BJ (cell line): ENCODE measurements at regions of chr14 and their contacts with region 1.

Region 1: GRCh38 chr14:49461529-49462401 is 124.4 kb downstream of the RPS29 start:
- DNase-seq: peak; percentile 16
- H3K4me3 ChIP-seq: no peak overlapping the region
- H3K27me3 ChIP-seq: no peaks in the 10 kb centered on the region
- CTCF ChIP-seq: peak; percentile 66

Region 2: GRCh38 chr14:49483268-49483667 is 21.5 kb after region 1 on chr14:
- CTCF ChIA-PET with region 1: interaction called, 13 read pairs
- POLR2A ChIA-PET with region 1: no interaction called
- DNase-seq: no peak
- H3K4me3 ChIP-seq: no peak overlapping the region
- H3K27me3 ChIP-seq: no peaks in the 10 kb centered on the region
- CTCF ChIP-seq: no peak

Region 3: DNA sequence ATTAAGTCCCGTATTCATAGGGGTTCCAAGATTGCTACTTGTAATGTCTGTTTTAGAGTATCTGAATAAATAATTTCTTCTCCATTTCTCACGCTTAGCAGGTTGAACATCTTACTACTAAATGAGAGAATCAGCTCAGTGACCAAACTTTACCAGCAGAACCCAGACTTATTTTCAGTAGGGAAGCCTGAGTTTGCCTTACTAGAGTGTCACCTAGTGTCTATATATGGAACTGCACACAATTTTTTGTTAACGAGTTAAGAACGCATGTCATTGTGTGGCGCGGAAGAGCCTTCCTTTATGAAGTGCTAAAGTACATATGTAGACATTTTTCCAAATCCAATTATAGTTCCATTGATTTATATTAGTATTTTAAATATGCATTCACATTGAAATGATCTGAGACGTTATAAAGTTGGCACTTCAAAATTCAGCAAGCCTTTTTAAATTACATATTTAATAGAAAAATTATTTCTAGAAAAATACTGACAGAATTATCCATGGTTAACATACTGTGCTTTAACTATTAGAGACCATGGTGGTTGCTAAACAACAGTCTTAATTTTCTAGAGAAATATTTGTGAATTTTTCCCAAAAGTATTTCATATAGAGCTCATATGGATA is 36.1 kb after region 1 on chr14:
- CTCF ChIA-PET with region 1: interaction called, 28 read pairs
- POLR2A ChIA-PET with region 1: no interaction called
- DNase-seq: no peak
- H3K4me3 ChIP-seq: no peak overlapping the region
- H3K27me3 ChIP-seq: peaks cover 5% of the 10 kb centered on the region
- CTCF ChIP-seq: peak; percentile 84

Region 4: GRCh38 chr14:49538926-49539325 is 77.2 kb after region 1 on chr14:
- CTCF ChIA-PET with region 1: interaction called, 10 read pairs
- POLR2A ChIA-PET with region 1: no interaction called
- DNase-seq: no peak
- H3K4me3 ChIP-seq: no peak overlapping the region
- H3K27me3 ChIP-seq: no peaks in the 10 kb centered on the region
- CTCF ChIP-seq: no peak

Region 5: GRCh38 chr14:49550286-49551184 is 88.8 kb after region 1 on chr14:
- CTCF ChIA-PET with region 1: interaction called, 15 read pairs
- POLR2A ChIA-PET with region 1: no interaction called
- DNase-seq: no peak
- H3K4me3 ChIP-seq: no peak overlapping the region
- H3K27me3 ChIP-seq: no peaks in the 10 kb centered on the region
- CTCF ChIP-seq: peak; percentile 32

Region 6: GRCh38 chr14:49620182-49621113 is 158.7 kb after region 1 on chr14 and contains the starts of genes MGAT2 and RPL36AL:
- CTCF ChIA-PET with region 1: no interaction called
- POLR2A ChIA-PET with region 1: interaction called, 21 read pairs
- DNase-seq: peak; percentile 91
- H3K4me3 ChIP-seq: peak within 1 kb of the TSS; percentile 95
- H3K27me3 ChIP-seq: no peaks in the 10 kb centered on the region
- CTCF ChIP-seq: peak; percentile 57
- polyA plus RNA-seq, gene MGAT2: 24.1 and 35.2 TPM in 2 replicates
- polyA plus RNA-seq, gene RPL36AL: 87.9 and 203 TPM in 2 replicates